Activated CD4-positive, alpha-beta T cell treated with anti-CD3 and anti-CD28 coated beads for 36 hours (primary cell): ENCODE measurements at regions of chr3 and their contacts with region 1.

Region 1: DNA sequence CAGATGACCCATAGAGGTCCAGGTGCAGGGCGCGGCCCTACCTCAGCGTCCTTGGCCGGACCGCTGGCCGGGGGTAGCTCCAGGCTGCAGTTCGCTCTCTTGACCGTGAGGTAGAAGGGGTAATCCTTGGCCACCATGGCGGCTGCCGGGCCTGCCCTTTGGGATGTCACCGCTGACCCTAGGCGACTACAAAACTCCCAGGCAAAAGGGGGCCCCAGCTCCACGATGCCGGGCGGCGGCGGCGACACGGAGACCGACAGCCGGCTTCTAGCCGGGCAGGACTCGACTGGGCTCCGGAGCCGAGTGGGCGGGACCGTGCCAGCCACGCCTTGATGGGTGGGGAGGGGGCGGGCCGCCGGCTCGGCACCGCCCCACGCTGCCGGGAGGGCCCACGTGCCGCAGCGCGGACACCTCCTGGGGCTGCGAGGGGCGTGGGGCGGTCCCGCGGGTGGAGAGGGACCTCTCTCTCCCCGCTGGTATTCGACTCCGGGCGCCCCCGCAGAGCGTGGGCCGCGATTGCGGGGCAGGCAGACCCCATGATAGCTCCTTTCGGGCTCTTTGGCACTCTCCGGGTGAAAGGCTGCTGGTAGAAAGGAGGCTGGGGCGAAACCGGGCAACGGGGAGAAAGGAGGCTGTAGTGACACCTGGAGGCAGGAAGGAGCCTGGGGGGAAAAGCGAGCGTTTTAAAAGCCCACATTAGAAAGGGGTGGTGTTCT is at the start of gene ARHGEF3:
- DNase-seq: peak; percentile 94
- ATAC-seq: peak; percentile 78
- H3K4me3 Mint-ChIP-seq: peak within 1 kb of the TSS; percentile 92
- H3K27ac Mint-ChIP-seq: peak within 1 kb of the TSS; percentile 86
- H3K4me1 Mint-ChIP-seq: peaks cover 32% of the 10 kb centered on the region
- H3K27me3 Mint-ChIP-seq: no peaks in the 10 kb centered on the region
- total RNA-seq, gene ARHGEF3: 34.4 to 38.3 TPM

Region 2: GRCh38 chr3:56693750-56694149 is 108.1 kb before region 1 on chr3:
- CTCF ChIA-PET with region 1: interaction called, 28 read pairs
- POLR2A ChIA-PET with region 1: no interaction called
- intact Hi-C with region 1: no loop called
- DNase-seq: no peak
- ATAC-seq: no peak
- H3K4me3 Mint-ChIP-seq: no peak overlapping the region
- H3K27ac Mint-ChIP-seq: peak overlapping the region; percentile 40
- H3K4me1 Mint-ChIP-seq: peaks cover 41% of the 10 kb centered on the region
- H3K27me3 Mint-ChIP-seq: no peaks in the 10 kb centered on the region

Region 3: DNA sequence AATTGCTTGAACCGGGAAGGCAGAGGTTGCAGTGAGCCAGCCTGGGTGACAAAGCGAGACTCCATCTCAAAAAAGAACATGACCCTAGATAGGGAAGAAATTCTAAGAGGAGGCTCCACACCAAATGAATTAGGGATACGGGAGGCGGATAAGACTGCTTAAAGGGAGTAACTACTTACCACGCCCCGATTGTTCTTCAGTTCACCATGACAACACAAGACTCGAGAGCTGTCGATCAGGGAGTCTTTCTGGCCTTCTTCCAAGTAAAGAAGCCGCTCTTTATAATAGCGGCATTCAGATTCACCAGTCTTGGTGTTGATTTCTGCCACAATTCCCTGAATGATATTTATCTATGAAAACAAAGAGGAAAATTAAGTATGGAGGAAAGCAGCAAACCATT is 64.8 kb before region 1 on chr3:
- CTCF ChIA-PET with region 1: interaction called, 52 read pairs
- POLR2A ChIA-PET with region 1: no interaction called
- intact Hi-C with region 1: no loop called
- DNase-seq: no peak
- ATAC-seq: no peak
- H3K4me3 Mint-ChIP-seq: no peak overlapping the region
- H3K27ac Mint-ChIP-seq: no peak overlapping the region
- H3K4me1 Mint-ChIP-seq: peaks cover 32% of the 10 kb centered on the region
- H3K27me3 Mint-ChIP-seq: no peaks in the 10 kb centered on the region

Region 4: GRCh38 chr3:56790016-56790821 is 11.6 kb before region 1 on chr3:
- CTCF ChIA-PET with region 1: interaction called, 270 read pairs
- POLR2A ChIA-PET with region 1: interaction called, 19 read pairs
- intact Hi-C with region 1: loop called in 1 of 2 experiments (anchors 1 kb)
- DNase-seq: peak; percentile 43
- ATAC-seq: peak; percentile 63
- H3K4me3 Mint-ChIP-seq: peak overlapping the region; percentile 38
- H3K27ac Mint-ChIP-seq: peak overlapping the region; percentile 85
- H3K4me1 Mint-ChIP-seq: peaks cover 84% of the 10 kb centered on the region
- H3K27me3 Mint-ChIP-seq: no peaks in the 10 kb centered on the region

Region 5: DNA sequence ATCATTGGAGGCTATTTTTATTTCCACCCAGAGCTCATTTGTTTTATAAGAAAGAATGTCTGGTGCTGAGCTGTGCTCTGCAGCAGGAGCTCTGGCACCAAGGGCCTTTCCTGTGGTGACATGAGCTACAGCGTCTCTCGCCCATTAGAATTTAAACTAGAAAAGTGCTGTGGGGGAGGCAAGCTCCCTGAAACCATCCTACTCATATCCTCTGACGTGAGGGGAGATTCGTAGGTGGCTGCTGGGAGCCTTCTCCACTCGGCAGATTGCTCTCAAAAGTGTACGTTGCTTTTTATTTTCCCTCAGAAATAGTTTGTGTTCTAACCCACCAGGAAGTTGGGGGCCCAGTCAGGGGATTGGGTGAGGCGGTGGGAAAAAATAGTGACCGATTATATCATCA is 76.3 kb after region 1 on chr3:
- CTCF ChIA-PET with region 1: interaction called, 21 read pairs
- POLR2A ChIA-PET with region 1: no interaction called
- intact Hi-C with region 1: loop called in 1 of 2 experiments (anchors 5 kb)
- DNase-seq: peak; percentile 79
- ATAC-seq: peak; percentile 87
- H3K4me3 Mint-ChIP-seq: peak overlapping the region; percentile 64
- H3K27ac Mint-ChIP-seq: peak overlapping the region; percentile 94
- H3K4me1 Mint-ChIP-seq: peaks cover 90% of the 10 kb centered on the region
- H3K27me3 Mint-ChIP-seq: no peaks in the 10 kb centered on the region

Region 6: GRCh38 chr3:56997675-56998074 is 195.9 kb after region 1 on chr3:
- CTCF ChIA-PET with region 1: interaction called, 16 read pairs
- POLR2A ChIA-PET with region 1: no interaction called
- intact Hi-C with region 1: no loop called
- DNase-seq: no peak
- ATAC-seq: no peak
- H3K4me3 Mint-ChIP-seq: no peak overlapping the region
- H3K27ac Mint-ChIP-seq: no peak overlapping the region
- H3K4me1 Mint-ChIP-seq: peaks cover 3% of the 10 kb centered on the region
- H3K27me3 Mint-ChIP-seq: no peaks in the 10 kb centered on the region